PC-9 (cell line): ENCODE measurements at regions of chr6 and their contacts with region 1.

Region 1: DNA sequence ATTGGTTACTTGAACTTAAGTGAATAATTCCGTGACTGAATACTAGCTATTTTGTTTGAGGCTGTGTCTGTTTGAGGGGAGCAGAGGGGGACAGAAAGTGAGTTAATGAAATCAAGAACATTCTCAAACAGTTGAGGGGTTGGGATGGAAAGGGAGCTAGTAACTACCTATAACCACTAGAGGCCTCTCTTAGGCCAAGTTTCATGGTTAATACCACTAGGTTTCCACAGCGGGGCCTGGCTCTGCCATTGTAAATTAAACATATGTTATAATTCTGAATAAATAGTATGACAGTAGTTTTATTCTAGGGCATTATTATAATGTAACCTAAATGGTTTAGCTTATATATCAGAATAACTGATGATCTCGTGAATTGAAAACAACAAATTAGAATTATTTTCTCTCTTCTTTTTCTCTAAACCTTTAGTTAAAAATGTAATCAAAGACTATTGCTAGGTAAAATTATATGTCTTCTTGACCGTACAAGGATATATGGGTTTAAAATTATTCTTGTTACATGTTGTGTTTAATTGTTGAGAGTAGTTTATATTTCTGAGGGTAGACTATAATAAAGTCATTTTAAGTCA is 108.1 kb downstream of the BCKDHB start:
- DNase-seq: peak in 1 of 2 experiments; percentile 7
- H3K4me3 ChIP-seq: no peak overlapping the region
- H3K27ac ChIP-seq: no peak overlapping the region
- H3K4me1 ChIP-seq: 0 out of 2 replicates have a peak, but pooled peaks cover 7% of the 10 kb centered on the region
- H3K27me3 ChIP-seq: no peaks in the 10 kb centered on the region
- CTCF ChIP-seq: peak; percentile 73

Region 2: DNA sequence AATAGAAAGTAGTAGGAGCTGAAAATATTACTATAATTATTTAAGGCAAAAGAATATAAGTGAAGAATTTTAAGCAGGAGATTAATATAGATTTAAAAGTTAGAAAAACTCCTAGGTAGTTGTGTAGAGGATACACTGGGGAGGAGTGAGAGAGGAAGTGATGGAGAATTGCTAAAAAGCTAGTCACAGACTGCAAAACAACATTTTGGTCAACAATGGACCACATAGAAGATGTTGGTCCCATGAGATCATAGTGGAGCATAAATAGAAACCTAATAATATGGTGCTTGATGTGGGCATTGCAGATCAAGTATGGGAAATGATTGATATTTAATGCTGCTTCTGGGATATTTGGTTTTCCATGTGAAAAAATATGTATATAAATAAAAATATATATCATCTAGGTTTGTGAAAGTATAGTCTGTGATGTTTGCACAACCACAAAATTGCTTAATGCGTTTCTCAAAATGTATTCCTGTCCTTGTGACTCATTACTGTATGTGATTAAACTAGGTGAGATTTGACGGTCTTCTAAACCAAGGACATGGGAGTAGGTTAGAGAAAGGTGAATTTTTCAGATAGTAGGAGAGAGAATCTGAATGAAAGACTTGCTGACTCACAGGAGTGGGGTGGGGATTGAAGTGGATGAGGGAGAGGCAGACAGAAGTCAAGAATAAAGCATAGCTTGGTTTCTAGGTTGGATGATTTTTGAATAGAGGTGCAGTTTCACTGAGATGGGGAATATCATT is 65.9 kb after region 1 on chr6:
- CTCF ChIA-PET with region 1: no interaction called
- POLR2A ChIA-PET with region 1: no interaction called
- intact Hi-C with region 1: no loop called
- DNase-seq: peak; percentile 3 to 60
- H3K4me3 ChIP-seq: no peak overlapping the region
- H3K27ac ChIP-seq: peak overlapping the region; percentile 54
- H3K4me1 ChIP-seq: no peaks in the 10 kb centered on the region; the same call in 1 of the 2 replicates
- H3K27me3 ChIP-seq: no peaks in the 10 kb centered on the region
- CTCF ChIP-seq: no peak

Region 3: DNA sequence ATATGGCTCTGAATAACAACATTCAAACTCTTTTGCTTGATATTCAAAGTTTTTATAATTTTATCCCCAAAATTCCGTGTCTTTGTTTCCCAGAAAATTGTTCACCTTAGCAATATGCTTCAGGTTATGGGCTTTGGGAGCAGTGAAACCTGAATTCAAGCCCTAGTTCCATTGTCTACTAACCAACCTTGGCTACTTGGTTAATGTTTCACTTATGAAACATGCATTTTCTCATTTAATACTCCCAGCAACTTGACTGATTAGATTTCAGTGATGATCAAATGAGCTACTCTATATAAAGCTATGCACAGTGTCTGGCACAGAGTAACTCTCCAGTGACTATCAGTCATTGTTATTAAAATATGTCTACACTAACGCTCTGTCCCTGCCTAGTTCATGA is 1730.1 kb after region 1 on chr6:
- CTCF ChIA-PET with region 1: no interaction called
- POLR2A ChIA-PET with region 1: interaction called, 11 read pairs
- intact Hi-C with region 1: no loop called
- DNase-seq: no peak
- H3K4me3 ChIP-seq: no peak overlapping the region
- H3K27ac ChIP-seq: no peak overlapping the region
- H3K4me1 ChIP-seq: peaks cover 3% of the 10 kb centered on the region
- H3K27me3 ChIP-seq: no peaks in the 10 kb centered on the region
- CTCF ChIP-seq: no peak

Region 4: GRCh38 chr6:81981812-81982211 is 1767.3 kb after region 1 on chr6:
- CTCF ChIA-PET with region 1: no interaction called
- POLR2A ChIA-PET with region 1: no interaction called
- intact Hi-C with region 1: loop called (anchors 10 kb)
- DNase-seq: peak in 1 of 2 experiments; percentile 61
- H3K4me3 ChIP-seq: no peak overlapping the region
- H3K27ac ChIP-seq: peak overlapping the region; percentile 53; the same call in 1 of the 2 replicates
- H3K4me1 ChIP-seq: peaks cover 25% of the 10 kb centered on the region
- H3K27me3 ChIP-seq: no peaks in the 10 kb centered on the region
- CTCF ChIP-seq: no peak